B cell (primary cell): ENCODE measurements at regions of chr17 and their contacts with region 1.

Region 1: GRCh38 chr17:38967290-38967738 is at the start of gene FBXO47:
- DNase-seq: peak; percentile 88
- ATAC-seq: peak; percentile 97
- H3K4me3 ChIP-seq: peak within 1 kb of the TSS in 4 of 5 experiments; percentile 30 to 50 (median 38)
- H3K4me3 Mint-ChIP-seq: peak within 1 kb of the TSS; percentile 82
- H3K27ac ChIP-seq: peak within 1 kb of the TSS in 1 of 2 donors; percentile 62
- H3K27ac Mint-ChIP-seq: peak within 1 kb of the TSS; percentile 88
- H3K4me1 ChIP-seq: peaks cover 0 to 13% of the 10 kb centered on the region in 2 donors
- H3K4me1 Mint-ChIP-seq: peaks cover 7% of the 10 kb centered on the region
- H3K27me3 ChIP-seq: no peaks in the 10 kb centered on the region
- H3K27me3 Mint-ChIP-seq: peaks cover 2% of the 10 kb centered on the region
- CTCF ChIP-seq: no peak
- total RNA-seq, gene FBXO47: not detected in 2 replicates

Region 2: DNA sequence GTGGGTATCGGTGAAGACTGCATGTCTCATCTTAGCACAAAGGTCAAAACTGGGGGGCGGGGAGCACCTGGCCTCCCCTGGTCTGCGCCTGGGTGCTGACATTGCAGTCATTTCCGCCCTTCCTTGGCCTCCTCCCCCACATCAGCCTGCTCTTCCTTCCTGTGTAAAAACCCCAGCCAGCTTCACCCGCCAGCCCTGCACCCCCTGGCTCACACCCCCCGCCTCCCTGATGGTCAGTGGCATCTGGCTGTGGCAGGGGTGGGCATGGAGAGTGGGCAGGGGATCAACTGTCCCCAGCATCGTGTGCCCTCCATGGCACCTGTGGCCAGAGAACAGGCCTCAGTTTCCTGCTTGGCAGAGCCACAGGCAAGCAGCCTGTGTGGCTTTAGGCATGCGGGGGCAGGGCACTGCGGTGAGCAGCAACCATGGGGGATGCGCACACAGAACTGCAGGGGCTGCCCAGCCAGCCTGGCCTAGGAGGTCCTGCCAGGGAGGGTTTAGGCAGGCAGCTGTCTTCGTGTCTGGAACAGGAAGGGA is 68.4 kb before region 1 on chr17:
- CTCF ChIA-PET with region 1: no interaction called
- POLR2A ChIA-PET with region 1: no interaction called
- intact Hi-C with region 1: loop called (anchors 2 kb)
- DNase-seq: peak; percentile 85
- ATAC-seq: peak; percentile 92
- H3K4me3 ChIP-seq: peak overlapping the region; percentile 23 to 55 (median 36)
- H3K4me3 Mint-ChIP-seq: peak overlapping the region; percentile 91
- H3K27ac ChIP-seq: peak overlapping the region; percentile 90 to 96
- H3K27ac Mint-ChIP-seq: peak overlapping the region; percentile 99
- H3K4me1 ChIP-seq: peaks cover 29 to 45% of the 10 kb centered on the region in 2 donors
- H3K4me1 Mint-ChIP-seq: peaks cover 30% of the 10 kb centered on the region
- H3K27me3 ChIP-seq: no peaks in the 10 kb centered on the region
- H3K27me3 Mint-ChIP-seq: no peaks in the 10 kb centered on the region
- CTCF ChIP-seq: no peak

Region 3: DNA sequence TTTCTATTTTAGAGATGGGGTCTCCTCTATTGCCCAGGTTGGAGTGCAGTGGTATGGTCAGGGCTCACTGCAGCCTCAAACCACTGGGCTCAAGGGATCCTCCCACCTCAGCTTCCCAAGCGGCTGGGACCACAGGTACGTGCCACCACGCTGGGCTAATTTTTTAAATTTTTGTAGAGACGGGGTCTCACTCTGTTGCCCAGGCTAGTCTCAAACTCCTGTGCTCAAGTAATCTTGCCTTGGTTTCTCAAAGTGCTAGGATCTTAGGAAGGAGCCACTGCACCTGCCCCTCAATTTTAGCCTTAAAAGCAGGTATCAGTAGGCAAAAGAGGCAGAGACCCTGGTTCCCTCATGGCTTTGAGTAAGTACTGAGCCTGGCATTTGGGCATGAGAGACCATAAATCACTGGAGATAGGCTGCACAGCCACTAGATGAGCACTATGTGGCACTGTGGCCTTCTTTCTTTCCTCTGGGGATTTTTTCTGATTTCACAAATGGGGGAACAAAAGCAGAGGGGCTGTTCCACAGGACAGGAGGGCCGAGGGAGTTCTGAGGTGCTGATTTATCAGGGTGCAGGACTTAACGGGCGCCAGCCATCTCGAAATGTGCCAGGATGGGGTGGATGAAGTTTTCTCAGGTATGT is 101.9 kb after region 1 on chr17:
- CTCF ChIA-PET with region 1: no interaction called
- POLR2A ChIA-PET with region 1: no interaction called
- intact Hi-C with region 1: no loop called
- DNase-seq: peak; percentile 65
- ATAC-seq: peak; percentile 71
- H3K4me3 ChIP-seq: no peak overlapping the region
- H3K4me3 Mint-ChIP-seq: no peak overlapping the region
- H3K27ac ChIP-seq: no peak overlapping the region
- H3K27ac Mint-ChIP-seq: no peak overlapping the region
- H3K4me1 ChIP-seq: peaks cover 0 to 4% of the 10 kb centered on the region in 2 donors
- H3K4me1 Mint-ChIP-seq: no peaks in the 10 kb centered on the region
- H3K27me3 ChIP-seq: peaks cover 0 to 14% (median 4%) of the 10 kb centered on the region in 4 experiments
- H3K27me3 Mint-ChIP-seq: peaks cover 4% of the 10 kb centered on the region
- CTCF ChIP-seq: peak; percentile 62

Region 4: GRCh38 chr17:39132192-39132610 is 164.9 kb after region 1 on chr17:
- CTCF ChIA-PET with region 1: no interaction called
- POLR2A ChIA-PET with region 1: no interaction called
- intact Hi-C with region 1: no loop called
- DNase-seq: no peak
- ATAC-seq: no peak
- H3K4me3 ChIP-seq: no peak overlapping the region
- H3K4me3 Mint-ChIP-seq: no peak overlapping the region
- H3K27ac ChIP-seq: no peak overlapping the region
- H3K27ac Mint-ChIP-seq: no peak overlapping the region
- H3K4me1 ChIP-seq: no peaks in the 10 kb centered on the region
- H3K4me1 Mint-ChIP-seq: no peaks in the 10 kb centered on the region
- H3K27me3 ChIP-seq: no peaks in the 10 kb centered on the region
- H3K27me3 Mint-ChIP-seq: no peaks in the 10 kb centered on the region
- CTCF ChIP-seq: no peak